Ascending aorta (tissue), 2 donors: ENCODE measurements at regions of chr13 and their contacts with region 1.

Region 1: GRCh38 chr13:110561344-110562035 is at the start of gene RAB20:
- DNase-seq: peak; percentile 48 to 92
- H3K4me3 ChIP-seq: peak within 1 kb of the TSS; percentile 79 to 82
- H3K27ac ChIP-seq: peak within 1 kb of the TSS; percentile 92 to 98
- H3K4me1 ChIP-seq: peaks cover 8 to 13% of the 10 kb centered on the region in 2 donors
- H3K27me3 ChIP-seq: no peaks in the 10 kb centered on the region
- CTCF ChIP-seq: no peak
- total RNA-seq, gene RAB20: 17.7 TPM

Region 2: GRCh38 chr13:110509971-110510786 is 51.3 kb before region 1 on chr13:
- intact Hi-C with region 1: loop called (anchors 2 kb)
- DNase-seq: no peak
- H3K4me3 ChIP-seq: no peak overlapping the region
- H3K27ac ChIP-seq: peak overlapping the region in 1 of 2 donors; percentile 7
- H3K4me1 ChIP-seq: peaks cover 7 to 15% of the 10 kb centered on the region in 2 donors
- H3K27me3 ChIP-seq: no peaks in the 10 kb centered on the region
- CTCF ChIP-seq: no peak

Region 3: GRCh38 chr13:110525328-110526319 is 35.9 kb before region 1 on chr13:
- intact Hi-C with region 1: loop called (anchors 1 kb)
- DNase-seq: no peak
- H3K4me3 ChIP-seq: no peak overlapping the region
- H3K27ac ChIP-seq: peak overlapping the region; percentile 89 to 90
- H3K4me1 ChIP-seq: peaks cover 45 to 86% of the 10 kb centered on the region in 2 donors
- H3K27me3 ChIP-seq: no peaks in the 10 kb centered on the region
- CTCF ChIP-seq: no peak

Region 4: DNA sequence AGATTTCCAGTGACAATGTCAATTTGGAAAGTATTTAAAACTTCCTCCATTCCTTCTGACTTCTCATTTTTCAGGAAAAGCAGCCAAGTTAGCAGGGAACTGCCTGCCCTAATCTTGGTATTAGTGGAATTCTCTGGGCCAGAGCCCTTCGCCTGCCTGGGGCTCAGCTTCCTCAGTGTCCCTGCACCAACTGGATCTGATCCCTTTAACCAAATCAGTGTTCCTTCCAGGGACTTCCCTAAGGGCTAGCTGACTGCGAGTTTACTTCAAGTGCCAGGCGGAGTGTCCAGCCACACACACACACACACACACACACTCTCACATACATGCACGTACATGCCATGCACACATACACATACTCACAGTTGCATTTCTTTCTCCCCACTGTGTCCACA is 20.0 kb before region 1 on chr13:
- intact Hi-C with region 1: loop called (anchors 1 kb)
- DNase-seq: no peak
- H3K4me3 ChIP-seq: no peak overlapping the region
- H3K27ac ChIP-seq: peak overlapping the region; percentile 76 to 85
- H3K4me1 ChIP-seq: peaks cover 6 to 50% of the 10 kb centered on the region in 2 donors
- H3K27me3 ChIP-seq: no peaks in the 10 kb centered on the region
- CTCF ChIP-seq: no peak

Region 5: DNA sequence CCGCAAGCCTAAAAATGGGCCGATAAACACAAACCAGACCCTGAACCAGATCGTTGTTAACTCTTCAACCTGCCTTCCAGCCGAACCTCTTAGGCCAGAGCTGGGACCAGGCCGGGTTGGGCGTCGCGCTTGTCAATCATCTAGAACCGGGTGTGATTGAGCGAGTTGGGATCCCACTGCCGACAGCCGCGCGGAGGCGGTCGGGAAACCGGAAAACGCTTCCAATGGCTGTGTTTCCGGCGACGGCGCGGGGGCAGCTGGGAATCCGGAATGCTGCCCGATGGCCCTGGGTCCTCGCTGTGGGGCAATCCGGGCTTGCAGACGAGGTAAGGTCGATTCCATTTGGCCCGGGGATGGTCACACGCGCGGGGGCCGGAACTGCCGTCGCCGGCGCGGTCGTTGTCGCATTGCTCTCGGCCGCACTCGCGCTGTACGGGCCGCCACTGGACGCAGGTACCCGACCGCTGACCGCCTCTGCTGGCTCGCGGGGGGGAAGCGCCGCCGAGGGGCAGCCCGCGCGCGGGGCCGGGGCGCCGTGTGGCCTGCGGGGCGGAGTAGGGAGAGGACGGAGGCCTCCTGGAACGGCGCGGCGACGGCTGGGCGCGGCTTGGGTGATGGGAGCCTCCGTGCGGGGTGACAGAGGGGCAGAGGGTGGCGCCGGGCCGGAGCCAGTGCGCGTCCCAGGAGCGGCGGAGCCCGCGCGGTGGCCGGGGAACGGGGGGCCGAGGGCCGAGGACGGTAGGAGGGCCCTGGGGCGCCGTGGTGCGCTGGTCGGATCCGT is 54.0 kb after region 1 on chr13 and contains the start of gene NAXD:
- intact Hi-C with region 1: loop called (anchors 2 kb)
- DNase-seq: peak; percentile 67 to 96
- H3K4me3 ChIP-seq: peak within 1 kb of the TSS; percentile 89 to 98
- H3K27ac ChIP-seq: peak within 1 kb of the TSS; percentile 95 to 96
- H3K4me1 ChIP-seq: peaks cover 6 to 21% of the 10 kb centered on the region in 2 donors
- H3K27me3 ChIP-seq: no peaks in the 10 kb centered on the region
- CTCF ChIP-seq: no peak
- total RNA-seq, gene NAXD: 1.9 TPM